GM18951 (cell line): ENCODE measurements at regions of chr1 and their contacts with region 1.

Region 1: DNA sequence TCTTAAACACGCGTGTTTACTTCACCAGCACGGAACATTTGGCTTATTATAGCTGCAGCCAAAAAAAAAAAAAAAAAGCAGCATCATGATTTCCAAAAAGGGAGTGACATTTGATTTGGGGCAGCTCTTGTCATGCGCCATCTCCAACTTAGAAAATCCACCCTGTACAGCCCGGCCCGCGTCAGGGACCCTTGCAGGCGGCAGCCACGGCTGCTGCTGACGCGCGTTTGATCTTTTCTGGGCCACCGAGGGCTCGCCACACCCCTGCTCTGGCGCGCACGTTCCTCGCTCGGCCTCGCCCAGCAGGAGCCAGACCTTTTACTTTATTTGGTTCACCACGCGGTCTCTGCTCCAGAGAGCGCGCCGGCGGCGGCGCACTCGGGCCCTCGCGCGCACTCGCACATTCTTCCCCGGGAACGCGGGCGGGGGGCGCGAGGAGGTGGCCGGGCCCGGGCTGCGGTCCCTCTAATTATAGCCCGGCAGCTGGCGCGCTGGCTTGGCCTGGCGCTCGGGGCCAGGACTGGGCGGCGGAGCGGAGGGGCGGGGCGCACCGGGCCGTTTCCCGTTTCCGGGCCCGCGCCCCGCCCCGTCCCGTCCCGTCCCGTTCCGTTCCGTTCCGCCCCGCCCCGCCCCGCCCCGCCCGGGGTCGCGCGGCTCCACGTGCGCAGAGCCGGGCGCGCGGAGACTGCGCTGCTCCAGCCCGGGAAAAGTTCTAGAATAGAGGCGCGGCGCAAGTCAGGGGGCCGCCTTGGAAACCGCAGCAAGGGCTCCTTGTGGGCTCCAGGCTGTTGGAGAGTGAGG is 10.2 kb downstream of the IRF2BP2 start:
- POLR2A ChIP-seq: peak; percentile 66

Region 2: GRCh38 chr1:234500269-234500668 is 99.5 kb before region 1 on chr1:
- in situ Hi-C with region 1: loop called (anchors 5 kb)
- POLR2A ChIP-seq: no peak

Region 3: DNA sequence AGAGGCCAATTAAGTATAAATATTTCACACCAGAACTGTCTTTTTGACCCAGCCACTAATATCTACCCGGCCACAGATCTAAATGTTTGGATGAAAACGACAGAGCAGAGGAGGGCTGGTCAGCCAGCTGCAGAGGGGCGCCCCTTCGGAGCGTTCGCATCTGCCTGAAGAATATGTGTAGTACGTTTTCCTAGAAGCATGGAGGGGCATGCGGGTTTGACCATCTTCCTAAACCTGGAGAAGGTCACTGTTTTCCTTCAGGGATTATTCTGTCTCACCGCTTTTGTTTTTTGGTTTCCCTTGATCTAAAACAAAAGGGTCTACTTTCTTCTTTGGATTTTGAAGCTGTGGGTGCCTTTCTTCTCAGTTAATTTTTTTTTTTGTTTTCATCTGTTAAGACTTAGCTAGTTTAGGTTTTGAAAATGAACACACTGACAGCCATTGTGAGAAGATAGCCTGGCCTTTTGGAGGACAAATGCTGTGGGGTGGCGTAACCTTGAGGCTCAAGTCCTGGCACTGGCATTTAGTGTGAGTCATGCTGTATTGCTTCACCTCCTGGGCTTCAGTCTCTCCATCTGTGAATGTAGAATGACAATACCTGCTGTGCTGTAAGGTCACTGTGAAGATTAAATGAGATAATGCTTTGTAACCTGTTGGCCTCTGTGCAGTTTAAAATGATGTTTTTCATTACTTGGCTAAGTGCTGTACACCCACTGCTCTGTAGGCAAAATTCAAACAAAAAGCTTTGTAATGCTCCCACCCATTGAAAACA is 84.2 kb after region 1 on chr1:
- in situ Hi-C with region 1: no loop called
- POLR2A ChIP-seq: no peak